HCT116 (cell line): ENCODE measurements at regions of chr3 and their contacts with region 1.

Region 1: GRCh38 chr3:148861277-148861869 is 3.7 kb upstream of the CPA3 start:
- DNase-seq: peak; percentile 40
- ATAC-seq: peak; percentile 73
- H3K4me3 ChIP-seq: no peak overlapping the region
- H3K27ac ChIP-seq: no peak overlapping the region
- H3K4me1 ChIP-seq: no peaks in the 10 kb centered on the region
- H3K27me3 ChIP-seq: no peaks in the 10 kb centered on the region
- CTCF ChIP-seq: peak; percentile 53 to 84 (median 67)
- POLR2A ChIP-seq: no peak
- RAD21 ChIP-seq: peak; percentile 80

Region 2: DNA sequence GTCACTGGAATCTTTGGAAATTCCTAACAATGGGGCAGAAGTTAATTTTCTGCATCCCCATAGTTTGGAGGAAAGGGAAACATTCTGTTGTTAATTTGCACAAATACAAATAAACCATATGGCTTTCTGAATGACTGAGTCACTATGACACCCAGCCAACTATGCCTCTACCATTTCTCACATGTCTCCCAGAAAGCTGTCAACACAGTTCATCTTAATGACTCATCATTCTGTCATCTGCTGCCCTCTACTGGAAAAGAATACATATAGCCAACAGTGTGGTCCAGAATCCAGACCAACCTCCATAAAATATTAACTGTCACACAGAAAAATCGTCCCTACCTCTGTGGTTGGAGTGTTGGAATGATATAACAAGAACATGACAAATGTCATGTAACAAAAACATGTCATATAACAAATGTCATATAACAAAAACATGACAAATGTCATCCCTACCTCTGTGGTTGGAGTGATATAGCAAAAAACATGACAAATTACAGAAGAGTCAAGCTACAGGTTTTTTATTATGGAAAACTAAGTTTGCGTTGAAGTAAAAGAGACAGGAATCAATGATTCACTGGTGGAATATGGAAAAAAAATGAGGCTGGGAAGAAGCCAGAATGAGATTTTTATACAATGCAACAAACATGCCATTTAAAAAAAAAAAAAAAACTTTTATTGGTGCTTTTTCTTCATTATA is 82.3 kb after region 1 on chr3:
- CTCF ChIA-PET with region 1: interaction called, 23 read pairs
- POLR2A ChIA-PET with region 1: no interaction called
- RAD21 ChIA-PET with region 1: interaction called, 3 read pairs
- intact Hi-C with region 1: loop called (anchors 1 kb)
- DNase-seq: peak; percentile 66
- ATAC-seq: peak; percentile 80
- H3K4me3 ChIP-seq: no peak overlapping the region
- H3K27ac ChIP-seq: no peak overlapping the region
- H3K4me1 ChIP-seq: peaks cover 0 to 6% of the 10 kb centered on the region in 2 experiments; a peak in 2 of 4 replicates
- H3K27me3 ChIP-seq: no peaks in the 10 kb centered on the region
- CTCF ChIP-seq: peak; percentile 65 to 83 (median 80)
- POLR2A ChIP-seq: no peak
- RAD21 ChIP-seq: peak; percentile 90

Region 3: GRCh38 chr3:149273096-149273751 is 411.9 kb after region 1 on chr3:
- CTCF ChIA-PET with region 1: no interaction called
- POLR2A ChIA-PET with region 1: no interaction called
- RAD21 ChIA-PET with region 1: no interaction called
- intact Hi-C with region 1: loop called (anchors 5 kb)
- DNase-seq: peak; percentile 86
- ATAC-seq: peak; percentile 95
- H3K4me3 ChIP-seq: no peak overlapping the region
- H3K27ac ChIP-seq: no peak overlapping the region
- H3K4me1 ChIP-seq: no peaks in the 10 kb centered on the region
- H3K27me3 ChIP-seq: no peaks in the 10 kb centered on the region
- CTCF ChIP-seq: peak; percentile 90 to 100 (median 98)
- POLR2A ChIP-seq: no peak
- RAD21 ChIP-seq: peak; percentile 99